OCI-LY7 (cell line): ENCODE measurements at regions of chr1 and their contacts with region 1.

Region 1: GRCh38 chr1:4172644-4173599 is 272.9 kb upstream of the C1orf174 start:
- DNase-seq: peak; percentile 84
- H3K4me3 ChIP-seq: no peak overlapping the region
- H3K27ac ChIP-seq: no peak overlapping the region
- H3K4me1 ChIP-seq: peaks cover 23% of the 10 kb centered on the region
- CTCF ChIP-seq: peak; percentile 80

Region 2: GRCh38 chr1:4060850-4061249 is 112.1 kb before region 1 on chr1:
- CTCF ChIA-PET with region 1: no interaction called
- POLR2A ChIA-PET with region 1: no interaction called
- intact Hi-C with region 1: no loop called
- DNase-seq: no peak
- H3K4me3 ChIP-seq: no peak overlapping the region
- H3K27ac ChIP-seq: no peak overlapping the region
- H3K4me1 ChIP-seq: peaks cover 13% of the 10 kb centered on the region
- CTCF ChIP-seq: no peak

Region 3: DNA sequence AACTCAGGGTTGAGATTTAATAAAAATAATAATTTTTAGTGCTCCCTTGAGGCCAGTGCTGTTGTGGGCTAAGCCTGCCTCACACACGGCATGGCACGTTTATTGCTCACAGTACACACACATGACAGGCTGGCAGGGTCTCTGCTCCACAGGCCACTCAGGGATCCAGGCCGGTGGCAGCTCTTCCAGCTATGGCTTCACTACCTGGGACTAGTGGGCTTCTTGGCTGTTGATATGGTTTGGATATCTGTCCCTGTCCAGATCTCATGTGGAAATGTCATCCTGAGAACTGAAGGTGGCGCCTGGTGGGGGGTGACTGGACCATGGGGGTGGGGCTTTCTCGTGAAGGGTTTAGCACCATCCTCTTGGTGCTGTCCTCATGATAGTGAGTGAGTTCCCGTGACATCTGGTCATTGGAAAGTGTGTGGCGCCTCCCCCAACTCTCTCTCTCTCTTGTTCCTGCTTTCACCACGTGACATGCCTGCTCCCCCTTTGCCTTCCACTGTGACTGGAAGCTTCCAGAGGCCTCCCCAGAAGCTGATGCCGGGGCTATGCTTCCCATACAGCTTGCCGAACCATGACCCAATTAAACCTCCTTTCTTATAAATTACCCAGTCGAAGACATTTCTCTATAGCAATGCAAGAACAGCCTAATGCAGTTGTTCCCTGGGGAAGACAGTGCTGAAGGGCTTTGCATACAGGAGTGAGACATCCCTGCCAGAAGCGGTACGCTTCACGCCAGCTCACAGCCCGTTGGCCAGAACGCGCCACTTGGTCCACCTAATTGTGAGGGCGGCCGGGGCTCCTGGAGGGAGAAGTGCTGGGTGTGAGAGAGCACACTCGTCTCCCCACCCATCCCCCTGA is 46.0 kb before region 1 on chr1:
- CTCF ChIA-PET with region 1: no interaction called
- POLR2A ChIA-PET with region 1: no interaction called
- intact Hi-C with region 1: no loop called
- DNase-seq: no peak
- H3K4me3 ChIP-seq: no peak overlapping the region
- H3K27ac ChIP-seq: no peak overlapping the region
- H3K4me1 ChIP-seq: no peaks in the 10 kb centered on the region
- CTCF ChIP-seq: no peak

Region 4: GRCh38 chr1:4161366-4162006 is 11.4 kb before region 1 on chr1:
- CTCF ChIA-PET with region 1: no interaction called
- POLR2A ChIA-PET with region 1: no interaction called
- intact Hi-C with region 1: no loop called
- DNase-seq: no peak
- H3K4me3 ChIP-seq: no peak overlapping the region
- H3K27ac ChIP-seq: no peak overlapping the region
- H3K4me1 ChIP-seq: no peaks in the 10 kb centered on the region
- CTCF ChIP-seq: no peak

Region 5: DNA sequence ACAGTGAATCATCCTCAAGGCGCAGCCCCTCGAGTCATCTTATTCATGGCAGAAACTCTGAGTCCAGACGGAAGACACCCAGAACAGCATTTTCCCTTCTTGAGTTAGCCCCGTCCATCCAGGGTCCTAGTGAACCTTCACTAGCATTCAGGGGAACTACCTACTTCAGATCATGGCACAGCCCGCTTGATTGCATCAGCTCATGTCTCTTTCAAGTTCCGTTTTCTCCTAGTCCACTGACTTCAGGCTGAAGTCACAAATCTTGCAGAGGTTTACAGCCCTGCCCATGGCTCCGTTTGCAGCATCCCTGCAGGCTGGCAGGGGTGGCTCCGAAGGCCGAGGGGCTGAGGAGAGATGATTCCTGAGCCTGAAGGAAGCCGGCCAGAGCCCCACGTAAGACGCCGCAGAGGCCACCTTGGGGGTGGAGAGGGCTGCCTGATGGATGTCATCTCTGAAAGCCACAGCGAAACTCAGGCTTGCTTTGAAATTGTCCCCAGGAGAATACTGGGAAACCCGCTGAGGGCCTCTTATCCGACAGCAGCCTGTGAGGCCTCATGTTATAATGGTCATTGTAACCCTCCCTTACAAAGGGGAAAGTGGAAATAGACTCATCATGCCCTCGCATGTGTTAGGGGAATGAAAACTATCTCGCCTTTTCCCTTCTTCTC is 171.3 kb after region 1 on chr1:
- CTCF ChIA-PET with region 1: no interaction called
- POLR2A ChIA-PET with region 1: no interaction called
- intact Hi-C with region 1: loop called (anchors 10 kb)
- DNase-seq: peak; percentile 85
- H3K4me3 ChIP-seq: peak overlapping the region; percentile 32
- H3K27ac ChIP-seq: peak overlapping the region; percentile 53
- H3K4me1 ChIP-seq: peaks cover 15% of the 10 kb centered on the region
- CTCF ChIP-seq: no peak

Region 6: GRCh38 chr1:4425892-4426291 is 253.0 kb after region 1 on chr1:
- CTCF ChIA-PET with region 1: no interaction called
- POLR2A ChIA-PET with region 1: interaction called, 3 read pairs
- intact Hi-C with region 1: loop called (anchors 10 kb)
- DNase-seq: peak; percentile 97
- H3K4me3 ChIP-seq: peak overlapping the region; percentile 4
- H3K27ac ChIP-seq: no peak overlapping the region
- H3K4me1 ChIP-seq: peaks cover 30% of the 10 kb centered on the region
- CTCF ChIP-seq: no peak